CD4-positive, alpha-beta memory T cell (primary cell): ENCODE measurements at regions of chr3 and their contacts with region 1.

Region 1: GRCh38 chr3:187974871-187975271 is 179.1 kb upstream of the LPP start:
- DNase-seq: peak; percentile 55 to 70 (median 57)
- H3K4me3 ChIP-seq: peak overlapping the region; percentile 2 to 16
- H3K4me3 Mint-ChIP-seq: peak overlapping the region; percentile 57 to 90 (median 74)
- H3K27ac ChIP-seq: peak overlapping the region; percentile 46
- H3K27ac Mint-ChIP-seq: peak overlapping the region; percentile 85 to 98 (median 91)
- H3K4me1 ChIP-seq: peaks cover 55% of the 10 kb centered on the region
- H3K4me1 Mint-ChIP-seq: peaks cover 56 to 67% (median 62%) of the 10 kb centered on the region in 4 donors
- H3K27me3 ChIP-seq: no peaks in the 10 kb centered on the region
- H3K27me3 Mint-ChIP-seq: no peaks in the 10 kb centered on the region

Region 2: GRCh38 chr3:187919048-187919447 is 55.8 kb before region 1 on chr3:
- CTCF ChIA-PET with region 1: interaction called, 4 read pairs
- POLR2A ChIA-PET with region 1: interaction called, 6 read pairs
- intact Hi-C with region 1: loop called (anchors 5 kb)
- DNase-seq: peak; percentile 52 to 78 (median 66)
- H3K4me3 ChIP-seq: peak overlapping the region; percentile 34 to 39
- H3K4me3 Mint-ChIP-seq: peak overlapping the region; percentile 81 to 88 (median 83)
- H3K27ac ChIP-seq: peak overlapping the region; percentile 46
- H3K27ac Mint-ChIP-seq: peak overlapping the region; percentile 89 to 94 (median 91)
- H3K4me1 ChIP-seq: peaks cover 38% of the 10 kb centered on the region
- H3K4me1 Mint-ChIP-seq: peaks cover 42 to 59% (median 50%) of the 10 kb centered on the region in 4 donors
- H3K27me3 ChIP-seq: no peaks in the 10 kb centered on the region
- H3K27me3 Mint-ChIP-seq: no peaks in the 10 kb centered on the region

Region 3: DNA sequence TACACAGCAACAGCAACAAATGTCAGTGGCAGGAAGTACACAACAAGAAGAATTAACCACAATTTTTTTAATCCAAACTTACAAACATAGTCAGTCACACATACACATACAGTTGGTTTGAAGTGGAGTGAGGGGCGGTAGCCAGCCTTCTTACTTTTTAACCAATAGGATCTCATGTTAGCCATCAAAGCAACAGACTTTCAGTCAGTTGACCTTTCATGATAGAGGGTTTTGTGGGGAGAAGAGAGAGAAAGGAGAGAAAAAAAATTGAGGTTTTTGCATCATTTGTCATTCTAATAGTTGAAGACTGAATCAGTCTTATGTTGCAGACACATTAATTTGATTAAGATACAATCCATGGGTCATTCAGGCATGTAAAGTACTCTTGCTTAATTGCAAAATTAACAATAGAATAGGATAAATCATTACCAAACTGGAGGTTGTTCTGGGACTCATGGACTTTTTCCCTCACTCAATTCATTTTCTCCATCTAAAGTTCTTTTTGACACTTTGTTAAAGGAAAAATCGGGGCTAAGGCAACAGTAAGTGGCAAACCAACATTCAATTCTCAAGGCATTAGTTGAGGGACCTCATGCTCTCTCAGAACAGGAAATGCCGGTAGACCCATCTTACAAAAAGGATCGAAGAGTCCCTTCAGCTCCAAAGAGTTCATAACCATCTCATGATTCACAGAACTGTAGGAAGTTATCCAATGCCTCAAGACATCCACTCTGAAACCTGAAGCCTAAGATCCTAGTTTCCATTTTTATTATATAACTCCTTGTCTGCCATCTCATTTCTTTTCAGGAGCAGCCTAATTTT is 19.6 kb after region 1 on chr3:
- CTCF ChIA-PET with region 1: interaction called, 26 read pairs
- POLR2A ChIA-PET with region 1: interaction called, 23 read pairs
- intact Hi-C with region 1: loop called (anchors 1 kb)
- DNase-seq: peak; percentile 51 to 69 (median 60)
- H3K4me3 ChIP-seq: peak overlapping the region in 1 of 2 donors; percentile 11
- H3K4me3 Mint-ChIP-seq: peak overlapping the region in 7 of 8 donors; percentile 59 to 86 (median 76)
- H3K27ac ChIP-seq: no peak overlapping the region
- H3K27ac Mint-ChIP-seq: peak overlapping the region; percentile 72 to 94 (median 88)
- H3K4me1 ChIP-seq: peaks cover 70% of the 10 kb centered on the region
- H3K4me1 Mint-ChIP-seq: peaks cover 65 to 82% (median 72%) of the 10 kb centered on the region in 4 donors
- H3K27me3 ChIP-seq: no peaks in the 10 kb centered on the region
- H3K27me3 Mint-ChIP-seq: no peaks in the 10 kb centered on the region

Region 4: DNA sequence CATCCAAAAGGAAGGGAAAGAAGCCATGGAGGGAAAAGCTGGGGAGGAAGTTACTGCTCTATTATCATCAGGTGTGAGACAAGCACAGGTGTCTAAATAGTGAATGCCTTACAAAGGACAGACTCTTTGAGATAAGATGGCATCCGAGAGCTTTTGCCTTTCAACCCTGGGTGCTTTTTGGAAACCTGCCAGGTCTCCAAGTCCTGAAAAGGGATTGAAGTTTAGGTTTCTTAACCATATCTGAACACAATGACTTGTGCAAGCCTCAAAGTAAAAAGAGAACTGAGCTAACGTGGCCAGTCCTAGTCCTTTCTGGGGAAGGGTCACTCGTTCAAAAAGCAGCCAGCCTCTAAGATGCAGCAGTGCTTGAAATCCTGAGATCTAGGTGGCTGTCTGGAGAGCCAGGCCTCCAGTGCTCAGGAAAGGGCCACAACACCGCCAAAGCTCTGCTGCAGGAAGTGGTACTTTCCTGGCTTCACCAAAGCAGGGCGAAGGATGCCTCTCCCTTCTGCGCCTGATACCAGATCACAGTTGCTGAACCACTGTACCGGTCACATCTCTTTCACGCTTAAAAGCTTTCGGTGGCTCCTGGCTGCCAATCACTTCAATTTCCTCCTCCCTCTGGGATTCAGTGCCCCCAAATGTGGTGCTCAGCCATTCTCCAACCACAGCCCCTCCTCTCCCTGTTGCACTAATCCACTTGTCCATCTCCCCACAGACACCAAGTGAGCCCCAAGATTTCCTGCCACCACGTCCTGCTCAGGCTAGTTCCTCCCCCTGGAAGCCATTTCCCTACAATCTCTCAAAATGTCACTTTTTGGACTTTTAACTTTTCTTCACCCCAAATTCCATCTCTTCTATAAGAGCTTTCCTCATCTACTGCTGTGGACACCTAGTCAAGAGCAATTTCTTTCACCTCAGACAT is 75.0 kb after region 1 on chr3:
- CTCF ChIA-PET with region 1: interaction called, 4 read pairs
- POLR2A ChIA-PET with region 1: interaction called, 10 read pairs
- intact Hi-C with region 1: no loop called
- DNase-seq: peak; percentile 41 to 46 (median 46)
- H3K4me3 ChIP-seq: no peak overlapping the region
- H3K4me3 Mint-ChIP-seq: peak overlapping the region in 7 of 8 donors; percentile 17 to 69 (median 44)
- H3K27ac ChIP-seq: no peak overlapping the region
- H3K27ac Mint-ChIP-seq: peak overlapping the region; percentile 0 to 87 (median 55)
- H3K4me1 ChIP-seq: peaks cover 17% of the 10 kb centered on the region
- H3K4me1 Mint-ChIP-seq: peaks cover 16 to 23% (median 19%) of the 10 kb centered on the region in 4 donors
- H3K27me3 ChIP-seq: no peaks in the 10 kb centered on the region
- H3K27me3 Mint-ChIP-seq: no peaks in the 10 kb centered on the region

Region 5: GRCh38 chr3:188154014-188154808 is 179.3 kb after region 1 on chr3 and contains the start of gene LPP:
- CTCF ChIA-PET with region 1: interaction called, 3 read pairs
- POLR2A ChIA-PET with region 1: interaction called, 6 read pairs
- intact Hi-C with region 1: loop called (anchors 1 kb)
- DNase-seq: peak; percentile 80 to 94 (median 83)
- H3K4me3 ChIP-seq: peak within 1 kb of the TSS; percentile 67 to 79
- H3K4me3 Mint-ChIP-seq: peak within 1 kb of the TSS; percentile 86 to 96 (median 91)
- H3K27ac ChIP-seq: peak within 1 kb of the TSS; percentile 76
- H3K27ac Mint-ChIP-seq: peak within 1 kb of the TSS; percentile 91 to 96 (median 92)
- H3K4me1 ChIP-seq: peaks cover 53% of the 10 kb centered on the region
- H3K4me1 Mint-ChIP-seq: peaks cover 44 to 72% (median 53%) of the 10 kb centered on the region in 4 donors
- H3K27me3 ChIP-seq: no peaks in the 10 kb centered on the region
- H3K27me3 Mint-ChIP-seq: no peaks in the 10 kb centered on the region
- total RNA-seq, gene LPP: 24.3 to 25.0 TPM

Region 6: GRCh38 chr3:188320757-188321156 is 345.9 kb after region 1 on chr3:
- CTCF ChIA-PET with region 1: no interaction called
- POLR2A ChIA-PET with region 1: no interaction called
- intact Hi-C with region 1: loop called (anchors 10 kb)
- DNase-seq: no peak
- H3K4me3 ChIP-seq: no peak overlapping the region
- H3K4me3 Mint-ChIP-seq: no peak overlapping the region
- H3K27ac ChIP-seq: no peak overlapping the region
- H3K27ac Mint-ChIP-seq: peak overlapping the region in 1 of 7 donors; percentile 25
- H3K4me1 ChIP-seq: peaks cover 32% of the 10 kb centered on the region
- H3K4me1 Mint-ChIP-seq: peaks cover 38 to 56% (median 42%) of the 10 kb centered on the region in 4 donors
- H3K27me3 ChIP-seq: no peaks in the 10 kb centered on the region
- H3K27me3 Mint-ChIP-seq: no peaks in the 10 kb centered on the region

Region 7: GRCh38 chr3:189148081-189148507 is 1173.2 kb after region 1 on chr3:
- CTCF ChIA-PET with region 1: interaction called, 4 read pairs
- POLR2A ChIA-PET with region 1: no interaction called
- intact Hi-C with region 1: loop called (anchors 5 kb)
- DNase-seq: peak; percentile 50 to 61 (median 60)
- H3K4me3 ChIP-seq: no peak overlapping the region
- H3K4me3 Mint-ChIP-seq: no peak overlapping the region
- H3K27ac ChIP-seq: no peak overlapping the region
- H3K27ac Mint-ChIP-seq: peak overlapping the region in 1 of 7 donors; percentile 62
- H3K4me1 ChIP-seq: peaks cover 19% of the 10 kb centered on the region
- H3K4me1 Mint-ChIP-seq: peaks cover 13 to 28% (median 21%) of the 10 kb centered on the region in 4 donors
- H3K27me3 ChIP-seq: no peaks in the 10 kb centered on the region
- H3K27me3 Mint-ChIP-seq: no peaks in the 10 kb centered on the region